Posterior vena cava (tissue), 2 donors: ENCODE measurements at regions of chr5 and their contacts with region 1.

Region 1: GRCh38 chr5:38393636-38394035 is 135.3 kb downstream of the EGFLAM start:
- DNase-seq: no peak

Region 2: GRCh38 chr5:37810311-37810710 is 583.3 kb before region 1 on chr5:
- intact Hi-C with region 1: no loop called
- DNase-seq: no peak

Region 3: DNA sequence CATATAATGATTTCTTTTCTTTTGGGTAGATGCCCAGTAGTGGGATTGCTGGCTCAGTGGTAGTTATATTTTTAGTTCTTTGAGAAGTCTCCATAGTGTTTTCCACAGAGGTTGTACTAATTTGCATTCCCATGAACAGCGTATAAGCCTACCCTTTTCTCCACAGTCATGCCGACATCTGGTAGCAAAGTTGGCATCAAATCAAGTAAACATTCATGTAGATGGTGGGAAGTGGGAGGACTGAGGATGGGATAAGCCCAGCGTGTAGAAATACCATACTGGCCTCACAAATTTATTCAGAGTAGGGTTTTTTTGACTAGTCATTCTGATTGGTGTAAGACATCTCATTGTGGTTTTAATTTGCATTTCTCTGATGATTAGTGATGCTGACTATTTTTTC is 19.9 kb before region 1 on chr5:
- intact Hi-C with region 1: loop called in 1 of 2 experiments (anchors 1 kb)
- DNase-seq: no peak

Region 4: GRCh38 chr5:38414348-38414747 is 20.7 kb after region 1 on chr5:
- intact Hi-C with region 1: no loop called
- DNase-seq: no peak

Region 5: DNA sequence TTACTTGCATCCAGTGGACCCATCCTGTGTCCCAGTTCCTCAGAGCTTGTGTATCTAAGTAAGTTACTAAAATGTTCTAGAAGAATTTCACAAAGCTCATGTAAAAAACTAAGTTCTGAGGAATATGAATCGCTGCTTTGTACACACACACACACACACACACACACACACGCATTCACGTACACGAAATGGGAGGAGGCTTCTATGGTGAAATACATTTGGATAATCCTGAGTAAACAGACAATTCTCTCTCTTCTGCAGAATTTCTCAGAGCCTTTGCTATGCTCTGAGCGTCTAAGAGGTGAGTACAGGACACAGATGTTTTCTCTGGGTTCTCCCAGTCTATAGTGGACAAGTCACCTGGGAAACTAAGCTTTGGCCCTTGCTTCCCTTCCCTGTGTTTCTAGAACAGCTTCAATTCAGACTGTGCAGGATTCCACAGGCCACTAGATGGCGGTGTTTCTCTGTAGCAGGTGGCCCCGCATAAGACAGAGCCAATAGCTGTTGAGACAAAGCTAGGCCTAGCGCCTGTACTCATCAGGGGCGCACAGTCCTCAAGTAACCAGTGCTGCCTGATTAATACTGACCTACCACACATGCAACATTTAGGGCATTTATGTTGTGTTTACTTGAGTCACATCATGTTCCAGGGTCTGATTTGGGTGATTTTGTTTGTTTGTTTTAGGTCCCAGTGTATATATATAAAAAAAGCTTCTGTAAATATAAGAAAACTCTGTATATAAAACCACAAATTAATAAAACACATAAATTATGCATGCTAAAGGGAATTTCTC is 48.0 kb after region 1 on chr5:
- intact Hi-C with region 1: no loop called
- DNase-seq: peak; percentile 94